Kidney (tissue), 22 donors: ENCODE measurements at regions of chr14 and their contacts with region 1.

Region 1: GRCh38 chr14:24429395-24430142 is at the starts of genes CBLN3 and KHNYN:
- DNase-seq: peak; percentile 89 to 98 (median 95)
- H3K4me3 ChIP-seq: peak within 1 kb of the TSS; percentile 81 to 98 (median 96)
- H3K27ac ChIP-seq: peak within 1 kb of the TSS; percentile 96 to 98
- H3K4me1 ChIP-seq: peaks cover 0 to 30% (median 15%) of the 10 kb centered on the region in 3 donors
- H3K27me3 ChIP-seq: no peaks in the 10 kb centered on the region
- CTCF ChIP-seq: no peak
- total RNA-seq, gene CBLN3: 1.3 TPM
- total RNA-seq, gene KHNYN: 53.9 TPM

Region 2: GRCh38 chr14:24332268-24332993 is 97.1 kb before region 1 on chr14:
- intact Hi-C with region 1: no loop called
- DNase-seq: peak; percentile 85 to 88 (median 87)
- H3K4me3 ChIP-seq: peak overlapping the region in 2 of 3 donors; percentile 30 to 56
- H3K27ac ChIP-seq: no peak overlapping the region
- H3K4me1 ChIP-seq: peaks cover 0 to 11% (median 10%) of the 10 kb centered on the region in 3 donors
- H3K27me3 ChIP-seq: peaks cover 14% of the 10 kb centered on the region
- CTCF ChIP-seq: peak; percentile 79

Region 3: GRCh38 chr14:24372701-24373416 is 56.7 kb before region 1 on chr14:
- intact Hi-C with region 1: loop called (anchors 10 kb)
- DNase-seq: peak; percentile 45 to 88 (median 74)
- H3K4me3 ChIP-seq: no peak overlapping the region
- H3K27ac ChIP-seq: no peak overlapping the region
- H3K4me1 ChIP-seq: peaks cover 0 to 3% (median 0%) of the 10 kb centered on the region in 3 donors
- H3K27me3 ChIP-seq: no peaks in the 10 kb centered on the region
- CTCF ChIP-seq: no peak